ENCODE measurements at regions of chr11 and their contacts with region 1.

Region 1: DNA sequence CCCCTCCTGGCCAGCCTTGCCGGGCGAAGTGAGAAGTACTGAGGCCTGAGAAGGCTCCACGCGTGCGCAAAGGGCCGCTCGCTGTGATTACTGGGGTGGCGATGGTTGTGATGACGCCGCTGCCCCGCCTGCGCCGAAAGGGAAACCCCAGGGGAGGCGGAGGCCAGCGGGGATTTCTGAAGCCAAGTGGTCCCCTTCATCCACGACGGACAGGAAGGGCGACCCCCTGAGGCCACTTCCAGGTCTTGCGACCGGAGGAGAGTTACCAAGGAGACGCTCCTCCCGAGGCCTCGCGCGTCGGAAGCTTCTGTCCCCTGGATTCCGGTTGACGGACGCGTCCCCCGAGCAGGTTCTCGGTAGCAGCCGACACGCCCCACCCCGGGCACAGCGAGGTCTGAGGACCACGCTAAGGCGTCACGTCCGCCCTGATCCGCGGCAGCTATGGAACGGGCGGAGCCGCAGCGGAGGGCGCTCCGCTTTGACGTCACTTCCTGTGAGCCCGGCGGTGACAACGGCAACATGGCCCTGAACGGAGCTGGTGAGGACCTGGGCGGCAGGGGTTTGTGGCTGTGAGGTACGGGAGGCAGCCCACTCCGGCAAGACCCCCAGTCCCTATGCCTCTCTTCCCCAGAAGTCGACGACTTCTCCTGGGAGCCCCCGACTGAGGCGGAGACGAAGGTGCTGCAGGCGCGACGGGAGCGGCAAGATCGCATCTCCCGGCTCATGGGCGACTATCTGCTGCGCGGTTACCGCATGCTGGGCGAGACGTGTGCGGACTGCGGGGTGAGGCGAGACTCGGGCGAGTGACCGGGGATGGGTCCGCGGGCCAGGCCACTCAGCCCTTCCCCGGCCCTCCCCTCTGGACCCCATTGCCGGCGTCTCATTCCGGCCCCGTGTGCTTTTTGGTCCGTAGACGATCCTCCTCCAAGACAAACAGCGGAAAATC is at the start of gene ZNRD2:
- DNase-seq: peak; percentile 100
- H3K4me3 ChIP-seq: peak within 1 kb of the TSS; percentile 78 to 98 (median 88)
- H3K27ac ChIP-seq: peak within 1 kb of the TSS; percentile 95 to 99 (median 96)
- H3K4me1 ChIP-seq: peaks cover 57 to 80% (median 65%) of the 10 kb centered on the region in 4 donors
- H3K27me3 ChIP-seq: no peaks in the 10 kb centered on the region
- CTCF ChIP-seq: peak; percentile 40 to 44 (median 40)
- EP300 ChIP-seq: peak; percentile 75
- POLR2A ChIP-seq: peak; percentile 50
- total RNA-seq, gene ZNRD2: 43.6 to 77.3 (median 63.3) TPM

Region 2: DNA sequence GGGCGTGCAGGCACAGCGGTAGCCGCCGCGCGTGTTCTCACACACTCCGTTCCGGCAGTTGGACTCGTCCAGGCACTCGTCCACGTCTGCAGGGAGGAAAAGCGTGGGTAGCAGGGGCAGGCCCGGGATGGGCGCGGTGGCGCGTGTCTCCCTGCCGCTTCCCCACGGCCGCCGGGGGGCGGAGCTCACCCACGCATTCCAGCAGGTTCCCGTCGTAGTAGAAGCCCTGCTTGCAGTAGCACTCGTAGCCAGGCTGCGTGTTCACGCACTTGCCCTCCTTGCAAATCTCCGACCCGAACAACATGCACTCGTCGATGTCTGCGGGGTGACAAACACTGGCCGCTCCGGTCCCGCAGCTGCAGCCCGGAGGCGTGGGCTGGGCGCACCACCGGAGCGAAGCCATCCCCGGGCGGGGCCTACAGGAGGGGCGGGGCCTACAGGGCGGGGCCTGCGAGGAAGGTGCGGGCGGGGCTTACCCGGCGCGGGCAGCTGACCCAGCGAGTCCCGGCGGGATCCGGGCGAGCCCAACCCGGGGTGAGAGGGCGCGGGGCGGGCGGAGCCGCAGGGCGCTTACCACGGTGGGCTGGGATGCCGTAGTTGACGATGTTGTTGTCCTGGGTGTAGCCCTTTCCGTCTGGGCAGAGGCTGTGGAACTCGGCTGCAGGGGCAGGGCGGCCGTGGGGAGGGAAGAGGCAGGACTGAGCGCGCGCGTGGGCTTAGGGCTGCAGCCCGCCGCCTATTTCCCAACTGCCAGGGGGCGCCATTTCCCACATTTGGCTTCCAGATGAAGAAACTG is 29.8 kb before region 1 on chr11:
- intact Hi-C with region 1: loop called (anchors 2 kb)
- DNase-seq: peak; percentile 98
- H3K4me3 ChIP-seq: peak overlapping the region; percentile 56 to 73 (median 58)
- H3K27ac ChIP-seq: peak overlapping the region; percentile 86 to 94 (median 88)
- H3K4me1 ChIP-seq: peaks cover 23 to 36% (median 32%) of the 10 kb centered on the region in 4 donors
- H3K27me3 ChIP-seq: no peaks in the 10 kb centered on the region
- CTCF ChIP-seq: peak; percentile 90 to 97 (median 92)
- EP300 ChIP-seq: no peak
- POLR2A ChIP-seq: peak; percentile 19

Region 3: GRCh38 chr11:65593518-65594298 is 23.5 kb after region 1 on chr11:
- intact Hi-C with region 1: loop called (anchors 2 kb)
- DNase-seq: no peak
- H3K4me3 ChIP-seq: no peak overlapping the region
- H3K27ac ChIP-seq: peak overlapping the region; percentile 21 to 96 (median 49)
- H3K4me1 ChIP-seq: peaks cover 29 to 68% (median 57%) of the 10 kb centered on the region in 4 donors
- H3K27me3 ChIP-seq: no peaks in the 10 kb centered on the region
- CTCF ChIP-seq: peak; percentile 63 to 75 (median 74)
- EP300 ChIP-seq: no peak
- POLR2A ChIP-seq: no peak

Region 4: GRCh38 chr11:65615229-65615941 is 45.1 kb after region 1 on chr11 and contains the start of gene PCNX3:
- intact Hi-C with region 1: loop called (anchors 2 kb)
- DNase-seq: peak; percentile 100
- H3K4me3 ChIP-seq: peak within 1 kb of the TSS; percentile 72 to 96 (median 82)
- H3K27ac ChIP-seq: peak within 1 kb of the TSS; percentile 87 to 97 (median 96)
- H3K4me1 ChIP-seq: peaks cover 40 to 60% (median 55%) of the 10 kb centered on the region in 4 donors
- H3K27me3 ChIP-seq: no peaks in the 10 kb centered on the region
- CTCF ChIP-seq: peak in 1 of 3 experiments; percentile 35
- EP300 ChIP-seq: no peak
- POLR2A ChIP-seq: peak; percentile 19
- total RNA-seq, gene PCNX3: 21.4 to 43.1 (median 27.1) TPM